ENCODE measurements at regions of chr7 and their contacts with region 1.

Region 1: GRCh38 chr7:28481091-28481926 is 69.0 kb downstream of the CREB5 start:
- DNase-seq: peak; percentile 85
- ATAC-seq: peak; percentile 63
- H3K4me3 ChIP-seq: no peak overlapping the region
- H3K27ac ChIP-seq: peak overlapping the region; percentile 72
- H3K4me1 ChIP-seq: peaks cover 41% of the 10 kb centered on the region
- H3K27me3 ChIP-seq: no peaks in the 10 kb centered on the region
- CTCF ChIP-seq: no peak
- EP300 ChIP-seq: peak; percentile 88 to 94
- POLR2A ChIP-seq: no peak
- RAD21 ChIP-seq: peak; percentile 26

Region 2: DNA sequence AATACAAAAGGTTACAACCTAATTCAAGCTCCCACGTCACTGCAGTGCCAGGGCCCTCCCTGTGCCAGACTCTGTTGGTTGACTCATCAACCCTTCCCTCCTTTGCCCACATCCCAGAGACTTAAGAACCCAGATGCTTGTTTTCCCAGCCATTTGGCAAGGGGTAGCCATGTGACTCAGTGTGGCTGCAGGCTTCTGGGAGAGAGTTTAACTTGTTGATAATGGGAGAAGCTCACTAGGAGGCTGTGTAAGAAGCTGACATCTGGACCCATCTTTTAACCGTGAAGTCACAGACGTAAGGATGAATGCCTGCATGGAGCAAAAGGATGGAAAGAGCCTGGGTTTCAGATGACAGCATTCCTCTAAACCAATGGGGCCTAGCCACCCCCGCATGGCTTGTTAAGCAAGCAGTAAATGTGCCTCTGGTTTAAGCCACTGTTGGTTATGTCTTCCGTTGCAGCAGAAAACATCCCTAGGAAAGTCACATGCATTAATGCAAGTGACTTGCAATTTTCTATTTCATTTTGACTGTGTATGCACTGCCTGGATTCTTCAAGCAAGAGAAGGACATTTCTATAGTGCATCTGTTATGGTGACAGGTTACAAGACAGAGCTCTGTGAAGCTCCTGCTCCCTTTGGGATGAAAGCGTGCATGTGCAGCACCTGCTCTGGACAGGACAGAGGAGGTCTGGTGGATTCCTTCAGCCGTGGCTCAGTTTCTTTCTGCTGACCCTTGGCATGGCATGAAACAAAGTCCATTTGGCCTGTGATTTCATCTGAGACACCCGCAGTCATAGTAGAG is 126.5 kb before region 1 on chr7:
- CTCF ChIA-PET with region 1: no interaction called
- POLR2A ChIA-PET with region 1: no interaction called
- RAD21 ChIA-PET with region 1: no interaction called
- SMC1A ChIA-PET with region 1: no interaction called
- in situ Hi-C with region 1: no loop called
- intact Hi-C with region 1: no loop called
- DNase-seq: no peak
- ATAC-seq: no peak
- H3K4me3 ChIP-seq: no peak overlapping the region
- H3K27ac ChIP-seq: no peak overlapping the region
- H3K4me1 ChIP-seq: no peaks in the 10 kb centered on the region
- H3K27me3 ChIP-seq: no peaks in the 10 kb centered on the region
- CTCF ChIP-seq: no peak
- EP300 ChIP-seq: no peak
- POLR2A ChIP-seq: no peak
- RAD21 ChIP-seq: no peak

Region 3: GRCh38 chr7:28419717-28420116 is 61.6 kb before region 1 on chr7:
- CTCF ChIA-PET with region 1: interaction called, 48 read pairs
- POLR2A ChIA-PET with region 1: interaction called, 74 read pairs
- RAD21 ChIA-PET with region 1: interaction called, 130 read pairs
- SMC1A ChIA-PET with region 1: interaction called, 120 read pairs
- in situ Hi-C with region 1: no loop called
- intact Hi-C with region 1: no loop called
- DNase-seq: no peak
- ATAC-seq: no peak
- H3K4me3 ChIP-seq: no peak overlapping the region
- H3K27ac ChIP-seq: no peak overlapping the region
- H3K4me1 ChIP-seq: no peaks in the 10 kb centered on the region
- H3K27me3 ChIP-seq: no peaks in the 10 kb centered on the region
- CTCF ChIP-seq: no peak
- EP300 ChIP-seq: no peak
- POLR2A ChIP-seq: no peak
- RAD21 ChIP-seq: no peak

Region 4: GRCh38 chr7:28497009-28497408 is 15.7 kb after region 1 on chr7:
- CTCF ChIA-PET with region 1: interaction called, 4 read pairs
- POLR2A ChIA-PET with region 1: interaction called, 3 read pairs
- RAD21 ChIA-PET with region 1: interaction called, 12 read pairs
- SMC1A ChIA-PET with region 1: interaction called, 16 read pairs
- in situ Hi-C with region 1: no loop called
- intact Hi-C with region 1: no loop called
- DNase-seq: no peak
- ATAC-seq: 0 out of 3 replicates have a peak, but pooled peaks have one; percentile 38
- H3K4me3 ChIP-seq: no peak overlapping the region
- H3K27ac ChIP-seq: no peak overlapping the region
- H3K4me1 ChIP-seq: no peaks in the 10 kb centered on the region
- H3K27me3 ChIP-seq: no peaks in the 10 kb centered on the region; a peak in 1 of 4 replicates
- CTCF ChIP-seq: no peak
- EP300 ChIP-seq: no peak
- POLR2A ChIP-seq: no peak
- RAD21 ChIP-seq: no peak

Region 5: GRCh38 chr7:28536259-28536658 is 55.0 kb after region 1 on chr7:
- CTCF ChIA-PET with region 1: interaction called, 7 read pairs
- POLR2A ChIA-PET with region 1: interaction called, 20 read pairs
- RAD21 ChIA-PET with region 1: interaction called, 97 read pairs
- SMC1A ChIA-PET with region 1: interaction called, 107 read pairs
- in situ Hi-C with region 1: loop called (anchors 5 kb)
- intact Hi-C with region 1: loop called (anchors 1 kb)
- DNase-seq: no peak
- ATAC-seq: no peak
- H3K4me3 ChIP-seq: no peak overlapping the region
- H3K27ac ChIP-seq: no peak overlapping the region
- H3K4me1 ChIP-seq: peaks cover 17% of the 10 kb centered on the region
- H3K27me3 ChIP-seq: no peaks in the 10 kb centered on the region
- CTCF ChIP-seq: no peak; a peak in 1 of 6 replicates
- EP300 ChIP-seq: no peak
- POLR2A ChIP-seq: no peak
- RAD21 ChIP-seq: no peak

Region 6: GRCh38 chr7:28615091-28615490 is 133.8 kb after region 1 on chr7:
- CTCF ChIA-PET with region 1: interaction called, 8 read pairs
- POLR2A ChIA-PET with region 1: interaction called, 8 read pairs
- RAD21 ChIA-PET with region 1: interaction called, 6 read pairs
- SMC1A ChIA-PET with region 1: interaction called, 16 read pairs
- in situ Hi-C with region 1: loop called (anchors 5 kb)
- intact Hi-C with region 1: no loop called
- DNase-seq: no peak
- ATAC-seq: no peak
- H3K4me3 ChIP-seq: no peak overlapping the region
- H3K27ac ChIP-seq: no peak overlapping the region
- H3K4me1 ChIP-seq: no peaks in the 10 kb centered on the region
- H3K27me3 ChIP-seq: no peaks in the 10 kb centered on the region
- CTCF ChIP-seq: peak; percentile 15 to 24 (median 18); a peak in 3 of 6 replicates
- EP300 ChIP-seq: no peak
- POLR2A ChIP-seq: no peak
- RAD21 ChIP-seq: peak; percentile 29; the same call in 1 of the 2 replicates

Region 7: DNA sequence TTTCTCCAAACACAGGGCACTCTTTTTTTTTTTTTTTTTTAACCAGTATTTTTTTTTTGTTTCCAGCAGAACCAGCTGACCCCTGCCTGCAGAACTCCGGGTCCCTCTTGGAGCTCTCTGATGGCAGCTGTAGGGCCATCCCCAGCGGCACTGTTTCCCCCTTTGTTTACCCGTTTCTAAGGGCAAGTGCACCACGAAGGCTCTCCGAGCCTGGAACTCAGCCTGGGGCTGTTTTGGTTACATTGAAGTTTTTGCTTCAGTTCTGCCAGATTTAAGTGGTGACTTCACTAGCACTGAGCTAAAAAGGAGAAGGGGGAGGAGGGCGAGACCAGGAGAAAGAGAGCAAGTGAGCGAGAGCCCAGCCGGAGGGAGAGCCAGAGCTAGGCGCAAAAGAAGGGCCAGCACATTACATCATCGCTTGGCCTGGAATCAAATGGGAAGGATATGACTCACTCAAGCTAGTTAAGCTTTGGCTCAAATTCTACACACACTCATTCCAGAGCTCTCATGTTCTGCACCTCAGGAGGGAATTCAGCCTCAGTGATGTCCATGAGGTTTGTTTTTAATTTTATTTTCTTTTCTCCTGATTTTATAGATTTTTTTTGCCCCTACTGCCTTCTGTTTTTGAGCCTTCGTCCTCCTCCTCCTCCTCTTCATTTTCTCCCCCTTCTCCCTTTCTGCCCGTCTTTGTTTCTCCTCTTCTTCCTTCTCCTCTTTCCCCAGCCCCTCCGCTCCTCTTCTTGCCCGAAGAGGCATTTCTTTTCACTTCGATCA is 204.5 kb after region 1 on chr7:
- CTCF ChIA-PET with region 1: no interaction called
- POLR2A ChIA-PET with region 1: no interaction called
- RAD21 ChIA-PET with region 1: interaction called, 4 read pairs
- SMC1A ChIA-PET with region 1: interaction called, 6 read pairs
- in situ Hi-C with region 1: no loop called
- intact Hi-C with region 1: loop called (anchors 5 kb)
- DNase-seq: no peak
- ATAC-seq: peak; percentile 78
- H3K4me3 ChIP-seq: peak overlapping the region; percentile 36
- H3K27ac ChIP-seq: no peak overlapping the region; the same call in 1 of the 2 replicates
- H3K4me1 ChIP-seq: peaks cover 19% of the 10 kb centered on the region
- H3K27me3 ChIP-seq: no peaks in the 10 kb centered on the region
- CTCF ChIP-seq: no peak
- EP300 ChIP-seq: 0 out of 4 replicates have a peak, but pooled peaks of 1 of the 2 experiments have one; percentile 7
- POLR2A ChIP-seq: no peak
- RAD21 ChIP-seq: no peak